IMR-90 (cell line): ENCODE measurements at regions of chr6 and their contacts with region 1.

Region 1: GRCh38 chr6:66717801-66718200 is 1010.8 kb upstream of the EYS start:
- DNase-seq: no peak
- ATAC-seq: no peak
- H3K4me3 ChIP-seq: no peak overlapping the region
- H3K27ac ChIP-seq: no peak overlapping the region
- H3K4me1 ChIP-seq: no peaks in the 10 kb centered on the region
- H3K27me3 ChIP-seq: no peaks in the 10 kb centered on the region
- CTCF ChIP-seq: no peak
- POLR2A ChIP-seq: no peak
- RAD21 ChIP-seq: no peak

Region 2: GRCh38 chr6:66662196-66662595 is 55.6 kb before region 1 on chr6:
- CTCF ChIA-PET with region 1: no interaction called
- POLR2A ChIA-PET with region 1: no interaction called
- dilution Hi-C with region 1: no loop called
- in situ Hi-C with region 1: no loop called
- intact Hi-C with region 1: no loop called
- DNase-seq: peak; percentile 1
- ATAC-seq: no peak
- H3K4me3 ChIP-seq: no peak overlapping the region
- H3K27ac ChIP-seq: no peak overlapping the region
- H3K4me1 ChIP-seq: no peaks in the 10 kb centered on the region
- H3K27me3 ChIP-seq: no peaks in the 10 kb centered on the region
- CTCF ChIP-seq: peak; percentile 2; the same call in 1 of the 2 replicates
- POLR2A ChIP-seq: no peak
- RAD21 ChIP-seq: no peak

Region 3: DNA sequence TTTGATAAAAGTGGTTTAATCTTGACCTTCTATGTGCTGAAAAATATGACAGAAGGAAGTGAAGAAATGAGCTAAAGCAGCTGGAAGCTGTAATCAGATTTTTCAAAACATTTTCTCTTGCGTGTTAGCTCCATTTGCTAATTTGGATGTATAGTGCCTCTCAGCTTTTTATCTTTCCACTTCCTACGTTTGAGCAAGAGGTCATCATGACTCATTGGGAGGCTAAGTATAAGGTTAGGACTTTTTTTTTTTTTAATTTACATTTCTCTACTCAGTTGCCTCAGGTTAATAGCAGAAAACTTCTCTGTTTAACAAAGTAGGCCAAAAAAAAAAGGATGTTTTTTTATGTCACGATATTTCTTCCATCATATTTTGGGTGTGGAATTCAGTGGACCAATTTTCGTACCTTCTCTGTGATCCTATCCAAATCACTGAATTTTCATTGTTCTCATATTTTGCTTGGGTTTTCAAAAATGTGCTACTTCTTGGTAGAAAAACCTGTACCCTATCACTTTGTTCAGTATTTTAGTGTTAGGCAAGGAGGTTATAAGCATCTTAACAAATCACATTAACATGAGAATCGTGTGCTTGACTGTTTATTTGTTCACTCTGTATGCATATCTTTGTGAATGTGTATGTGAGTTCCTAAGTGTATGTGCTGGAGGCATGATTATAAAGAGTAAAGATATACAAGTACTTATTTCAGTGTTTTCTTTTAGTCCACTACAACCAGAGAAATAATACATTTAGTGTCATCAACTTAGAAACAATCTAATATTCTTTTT is 17.5 kb after region 1 on chr6:
- CTCF ChIA-PET with region 1: no interaction called
- POLR2A ChIA-PET with region 1: no interaction called
- dilution Hi-C with region 1: no loop called
- in situ Hi-C with region 1: no loop called
- intact Hi-C with region 1: loop called (anchors 1 kb)
- DNase-seq: no peak
- ATAC-seq: no peak
- H3K4me3 ChIP-seq: no peak overlapping the region
- H3K27ac ChIP-seq: no peak overlapping the region
- H3K4me1 ChIP-seq: no peaks in the 10 kb centered on the region
- H3K27me3 ChIP-seq: no peaks in the 10 kb centered on the region
- CTCF ChIP-seq: no peak
- POLR2A ChIP-seq: no peak
- RAD21 ChIP-seq: no peak

Region 4: GRCh38 chr6:66965227-66965626 is 247.4 kb after region 1 on chr6:
- CTCF ChIA-PET with region 1: no interaction called
- POLR2A ChIA-PET with region 1: no interaction called
- dilution Hi-C with region 1: no loop called
- in situ Hi-C with region 1: no loop called
- intact Hi-C with region 1: no loop called
- DNase-seq: no peak
- ATAC-seq: no peak
- H3K4me3 ChIP-seq: no peak overlapping the region
- H3K27ac ChIP-seq: no peak overlapping the region
- H3K4me1 ChIP-seq: no peaks in the 10 kb centered on the region
- H3K27me3 ChIP-seq: no peaks in the 10 kb centered on the region
- CTCF ChIP-seq: no peak
- POLR2A ChIP-seq: no peak
- RAD21 ChIP-seq: no peak